ENCODE measurements at regions of chr2 and their contacts with region 1.

Region 1: GRCh38 chr2:134039912-134040581 is 213.8 kb upstream of the MGAT5 start:
- DNase-seq: no peak

Region 2: GRCh38 chr2:134023854-134024253 is 16.2 kb before region 1 on chr2:
- intact Hi-C with region 1: loop called in 1 of 2 experiments (anchors 1 kb)
- DNase-seq: no peak

Measured in posterior vena cava (tissue), 2 donors.